Psoas muscle (tissue), 8 donors: ENCODE measurements at regions of chr1 and their contacts with region 1.

Region 1: GRCh38 chr1:10032590-10033358 is at the start of gene UBE4B:
- DNase-seq: peak; percentile 98 to 99
- ATAC-seq: peak; percentile 97 to 100 (median 98)
- H3K4me3 ChIP-seq: peak within 1 kb of the TSS; percentile 89
- H3K27ac ChIP-seq: peak within 1 kb of the TSS; percentile 95
- H3K4me1 ChIP-seq: peaks cover 19% of the 10 kb centered on the region
- H3K27me3 ChIP-seq: no peaks in the 10 kb centered on the region
- CTCF ChIP-seq: peak; percentile 82
- total RNA-seq, gene UBE4B: 48.3 to 90.9 (median 60.7) TPM

Region 2: GRCh38 chr1:9874959-9875635 is 157.7 kb before region 1 on chr1:
- intact Hi-C with region 1: loop called (anchors 2 to 5 kb)
- DNase-seq: peak; percentile 71 to 81
- ATAC-seq: peak; percentile 77 to 90 (median 81)
- H3K4me3 ChIP-seq: peak overlapping the region; percentile 36
- H3K27ac ChIP-seq: no peak overlapping the region
- H3K4me1 ChIP-seq: peaks cover 28% of the 10 kb centered on the region
- H3K27me3 ChIP-seq: no peaks in the 10 kb centered on the region
- CTCF ChIP-seq: peak; percentile 94

Region 3: GRCh38 chr1:9910425-9911178 is 122.2 kb before region 1 on chr1:
- intact Hi-C with region 1: loop called in 1 of 2 experiments (anchors 1 kb)
- DNase-seq: peak; percentile 100
- ATAC-seq: peak; percentile 96 to 98 (median 98)
- H3K4me3 ChIP-seq: peak overlapping the region; percentile 63
- H3K27ac ChIP-seq: peak overlapping the region; percentile 78
- H3K4me1 ChIP-seq: peaks cover 13% of the 10 kb centered on the region
- H3K27me3 ChIP-seq: no peaks in the 10 kb centered on the region
- CTCF ChIP-seq: no peak

Region 4: DNA sequence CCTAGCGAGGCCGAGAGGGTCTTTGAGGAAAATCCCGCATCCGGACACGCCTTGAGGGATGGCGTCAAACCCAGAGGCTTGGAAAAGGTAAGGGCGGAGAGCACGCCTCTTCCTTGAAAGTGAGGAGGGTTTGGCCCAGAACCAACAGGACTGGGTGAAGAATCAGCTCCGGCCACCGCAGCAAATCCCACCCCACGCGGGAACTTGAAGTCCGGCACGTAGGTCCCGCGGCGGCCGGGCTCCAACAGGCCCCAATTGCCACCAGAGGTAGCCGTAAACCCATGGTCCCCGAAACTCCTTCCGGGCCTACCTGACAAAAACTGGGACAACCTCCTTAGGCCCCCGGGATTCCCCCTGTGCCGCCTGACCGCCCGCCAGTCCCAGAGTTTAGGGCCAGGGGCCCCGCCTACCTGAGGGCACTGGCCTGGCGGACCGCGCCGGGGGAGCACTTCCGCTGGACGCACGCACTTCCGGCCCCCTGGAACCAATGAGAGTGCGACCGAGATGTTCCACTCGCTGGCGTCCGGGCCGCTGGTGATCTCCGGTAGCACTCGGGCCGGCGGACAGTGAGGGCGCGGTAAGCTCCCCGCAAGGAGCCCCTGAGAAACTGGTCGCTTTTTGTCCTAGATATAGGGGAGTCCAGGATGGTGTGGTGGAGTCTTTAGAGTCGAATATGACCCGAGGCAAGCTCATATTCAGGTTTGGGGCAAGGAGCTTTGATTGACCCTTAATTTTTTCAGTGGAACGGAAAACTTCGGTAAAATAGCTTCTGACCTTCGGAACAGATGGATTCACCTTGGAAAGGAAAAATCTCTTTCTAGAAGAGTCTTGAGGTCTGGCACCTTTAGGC is 89.6 kb before region 1 on chr1 and contains the starts of genes LZIC and NMNAT1:
- intact Hi-C with region 1: loop called (anchors 2 to 5 kb)
- DNase-seq: peak; percentile 93 to 96
- ATAC-seq: peak; percentile 98 to 100 (median 99)
- H3K4me3 ChIP-seq: peak within 1 kb of the TSS; percentile 91
- H3K27ac ChIP-seq: peak within 1 kb of the TSS; percentile 91
- H3K4me1 ChIP-seq: peaks cover 31% of the 10 kb centered on the region
- H3K27me3 ChIP-seq: no peaks in the 10 kb centered on the region
- CTCF ChIP-seq: no peak
- total RNA-seq, gene LZIC: 17.6 to 24.9 (median 21.1) TPM
- total RNA-seq, gene NMNAT1: 8.0 to 18.2 (median 14.0) TPM